Common myeloid progenitor, CD34-positive (primary cell): ENCODE measurements at regions of chrX and their contacts with region 1.

Region 1: GRCh38 chrX:71181910-71182799 is 37.5 kb downstream of the NLGN3 start:
- DNase-seq: peak; percentile 92 to 96 (median 96)
- H3K4me3 ChIP-seq: peak overlapping the region; percentile 14 to 79 (median 57)
- H3K27ac ChIP-seq: peak overlapping the region; percentile 93 to 97
- H3K4me1 ChIP-seq: peaks cover 4 to 14% (median 9%) of the 10 kb centered on the region in 4 experiments
- H3K27me3 ChIP-seq: no peaks in the 10 kb centered on the region

Region 2: GRCh38 chrX:70970482-70970995 is 211.6 kb before region 1 on chrX:
- CTCF ChIA-PET with region 1: interaction called, 19 read pairs
- POLR2A ChIA-PET with region 1: no interaction called
- DNase-seq: peak; percentile 2 to 36 (median 26)
- H3K4me3 ChIP-seq: peak overlapping the region in 3 of 7 experiments; percentile 6 to 48 (median 28)
- H3K27ac ChIP-seq: no peak overlapping the region
- H3K4me1 ChIP-seq: peaks cover 0 to 5% (median 0%) of the 10 kb centered on the region in 4 experiments
- H3K27me3 ChIP-seq: no peaks in the 10 kb centered on the region

Region 3: DNA sequence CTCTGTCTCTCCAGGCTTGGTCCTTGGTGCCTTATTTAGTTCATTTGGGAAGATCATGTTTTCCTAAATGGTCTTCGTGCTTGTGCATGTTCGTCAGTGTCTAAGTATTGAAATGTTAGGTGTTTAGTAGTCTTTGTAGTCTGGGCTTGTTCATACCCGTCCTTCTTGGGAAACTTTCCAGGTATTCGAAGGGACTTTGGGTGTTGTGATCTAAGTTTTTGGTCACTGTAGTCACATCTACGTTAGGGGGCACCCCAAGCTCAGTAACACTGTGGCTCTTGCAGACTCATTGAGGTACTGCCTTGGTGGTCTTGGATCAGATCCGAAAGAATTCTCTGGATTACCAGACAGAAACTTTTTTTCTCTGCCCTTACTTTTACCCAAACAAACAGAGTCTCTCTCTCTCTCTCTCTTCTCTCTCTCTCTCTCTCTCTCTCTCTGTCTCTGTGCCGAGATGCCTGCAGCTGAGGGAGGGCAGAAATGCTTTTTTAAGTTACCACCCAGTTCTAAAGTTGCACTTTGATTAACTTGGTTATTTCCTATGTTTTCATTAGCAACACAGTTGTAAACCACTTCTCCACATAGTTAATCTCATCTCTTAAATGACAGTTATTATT is 183.6 kb before region 1 on chrX:
- CTCF ChIA-PET with region 1: interaction called, 11 read pairs
- POLR2A ChIA-PET with region 1: no interaction called
- DNase-seq: peak; percentile 46 to 67 (median 61)
- H3K4me3 ChIP-seq: no peak overlapping the region
- H3K27ac ChIP-seq: no peak overlapping the region
- H3K4me1 ChIP-seq: peaks cover 0 to 3% (median 0%) of the 10 kb centered on the region in 4 experiments
- H3K27me3 ChIP-seq: no peaks in the 10 kb centered on the region